ENCODE measurements at regions of chr12 and their contacts with region 1.

Region 1: DNA sequence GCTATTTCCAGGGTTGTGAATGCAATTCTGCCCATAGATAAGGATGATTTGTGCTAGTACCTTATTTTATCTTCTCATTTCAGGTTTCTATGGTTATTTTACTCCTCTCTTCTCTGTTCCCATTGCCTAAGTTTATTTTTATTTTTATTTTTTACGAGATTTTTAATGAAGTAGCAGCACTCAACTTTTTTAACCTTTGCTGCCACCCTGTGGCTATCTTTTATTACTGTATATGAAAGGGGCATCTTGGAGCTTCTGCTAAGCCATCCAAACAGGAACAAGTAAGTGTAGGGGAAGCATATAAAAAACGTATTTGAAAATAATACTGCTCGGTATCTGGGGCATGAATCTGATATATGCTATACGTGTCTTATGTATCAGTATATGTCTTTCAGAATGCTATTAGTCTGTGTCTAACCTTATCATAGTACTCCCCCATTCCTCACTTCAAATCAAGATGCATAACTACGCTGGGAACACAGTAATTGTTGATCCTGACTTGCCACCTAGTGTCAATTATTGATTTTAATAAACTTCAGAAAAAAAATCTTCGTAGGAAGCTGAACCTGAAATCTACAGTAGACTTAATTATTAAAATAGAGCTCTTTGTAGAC is 60.3 kb downstream of the KLRG1 start:
- DNase-seq: peak; percentile 34 to 57
- ATAC-seq: peak; percentile 70 to 91; a peak in 3 of 6 replicates
- H3K4me3 ChIP-seq: no peak overlapping the region
- H3K27ac ChIP-seq: no peak overlapping the region
- H3K4me1 ChIP-seq: no peaks in the 10 kb centered on the region
- CTCF ChIP-seq: peak; percentile 79
- EP300 ChIP-seq: no peak
- POLR2A ChIP-seq: no peak
- RAD21 ChIP-seq: peak; percentile 68 to 71

Region 2: DNA sequence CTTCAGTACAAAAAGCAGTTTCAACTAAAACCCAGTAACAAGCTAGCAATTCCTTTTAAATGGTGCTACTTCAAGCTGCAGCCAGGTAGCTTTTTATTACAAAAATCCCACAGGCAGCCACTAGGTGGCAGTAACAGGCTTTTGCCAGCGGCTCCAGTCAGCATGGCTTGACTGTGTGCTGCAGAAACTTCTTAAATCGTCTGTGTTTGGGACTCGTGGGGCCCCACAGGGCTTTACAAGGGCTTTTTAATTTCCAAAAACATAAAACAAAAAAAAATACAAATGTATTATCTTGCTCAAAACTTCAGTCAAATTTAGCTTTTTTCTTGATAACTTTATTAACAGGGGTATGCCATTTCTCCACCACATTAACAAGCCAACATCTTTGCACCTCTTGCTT is 505.3 kb before region 1 on chr12:
- CTCF ChIA-PET with region 1: interaction called, 20 read pairs
- POLR2A ChIA-PET with region 1: no interaction called
- DNase-seq: peak; percentile 44 to 66
- ATAC-seq: peak; percentile 84 to 95
- H3K4me3 ChIP-seq: no peak overlapping the region
- H3K27ac ChIP-seq: no peak overlapping the region
- H3K4me1 ChIP-seq: no peaks in the 10 kb centered on the region
- CTCF ChIP-seq: peak; percentile 82
- EP300 ChIP-seq: no peak
- POLR2A ChIP-seq: no peak
- RAD21 ChIP-seq: peak; percentile 72 to 76

Region 3: GRCh38 chr12:8949342-8950220 is 100.0 kb before region 1 on chr12 and contains the start of gene M6PR:
- CTCF ChIA-PET with region 1: interaction called, 19 read pairs
- POLR2A ChIA-PET with region 1: interaction called, 4 read pairs
- DNase-seq: peak; percentile 96 to 98
- ATAC-seq: peak; percentile 95 to 96
- H3K4me3 ChIP-seq: peak within 1 kb of the TSS; percentile 100
- H3K27ac ChIP-seq: peak within 1 kb of the TSS; percentile 90 to 93
- H3K4me1 ChIP-seq: peaks cover 19% of the 10 kb centered on the region
- CTCF ChIP-seq: peak; percentile 44
- EP300 ChIP-seq: no peak
- POLR2A ChIP-seq: peak; percentile 92
- RAD21 ChIP-seq: peak; percentile 52 to 60; a peak in 4 of 5 replicates
- polyA plus RNA-seq, gene M6PR: 162 and 227 TPM in 2 replicates

Region 4: DNA sequence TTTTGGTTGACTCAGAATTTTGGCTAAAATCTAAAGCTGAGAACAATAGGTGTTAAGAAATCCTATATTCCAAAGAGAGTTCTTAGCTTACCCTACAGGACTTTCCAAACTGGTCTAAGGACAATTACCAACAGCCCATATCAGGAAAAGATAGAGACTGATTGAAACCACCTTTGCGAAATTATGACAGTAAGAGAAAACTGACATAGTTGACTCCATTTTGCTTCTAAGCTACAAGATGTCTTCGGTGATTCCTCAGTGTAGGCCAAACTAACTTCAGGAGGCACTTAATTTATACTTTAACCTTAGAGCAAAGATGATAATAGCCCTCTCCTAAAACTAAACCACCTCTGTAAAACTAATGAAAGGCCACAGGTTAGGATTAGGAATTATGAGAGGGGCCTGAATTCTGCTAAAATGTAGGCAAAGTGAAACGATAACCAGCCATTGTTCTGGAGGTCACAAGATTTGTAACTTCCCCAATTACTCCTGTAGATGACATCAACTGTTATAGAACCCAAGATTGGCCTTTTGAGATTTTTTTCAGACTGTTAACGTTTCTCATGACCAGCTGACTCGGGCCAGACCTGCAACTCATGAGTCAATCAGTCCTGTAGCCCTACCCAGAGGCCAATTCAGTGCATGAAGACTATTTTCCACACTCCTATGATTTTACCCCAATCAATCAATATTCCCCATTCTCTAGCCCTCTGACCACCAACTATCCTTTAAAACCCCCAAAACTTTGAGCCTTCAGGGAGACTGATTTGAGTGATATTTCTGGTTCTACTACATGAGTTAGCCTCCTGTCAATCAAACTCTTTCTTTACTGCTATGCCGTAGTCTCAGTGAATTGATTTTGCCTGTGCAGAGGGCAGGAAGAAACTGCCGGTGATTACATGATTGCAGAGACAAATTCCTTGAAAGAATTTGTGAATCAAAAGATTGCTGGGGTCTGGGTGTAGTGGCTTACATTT is 17.1 kb before region 1 on chr12:
- CTCF ChIA-PET with region 1: interaction called, 17 read pairs
- POLR2A ChIA-PET with region 1: interaction called, 3 read pairs
- DNase-seq: no peak
- ATAC-seq: no peak
- H3K4me3 ChIP-seq: no peak overlapping the region
- H3K27ac ChIP-seq: no peak overlapping the region
- H3K4me1 ChIP-seq: no peaks in the 10 kb centered on the region
- CTCF ChIP-seq: no peak
- EP300 ChIP-seq: no peak
- POLR2A ChIP-seq: no peak
- RAD21 ChIP-seq: no peak

Region 5: DNA sequence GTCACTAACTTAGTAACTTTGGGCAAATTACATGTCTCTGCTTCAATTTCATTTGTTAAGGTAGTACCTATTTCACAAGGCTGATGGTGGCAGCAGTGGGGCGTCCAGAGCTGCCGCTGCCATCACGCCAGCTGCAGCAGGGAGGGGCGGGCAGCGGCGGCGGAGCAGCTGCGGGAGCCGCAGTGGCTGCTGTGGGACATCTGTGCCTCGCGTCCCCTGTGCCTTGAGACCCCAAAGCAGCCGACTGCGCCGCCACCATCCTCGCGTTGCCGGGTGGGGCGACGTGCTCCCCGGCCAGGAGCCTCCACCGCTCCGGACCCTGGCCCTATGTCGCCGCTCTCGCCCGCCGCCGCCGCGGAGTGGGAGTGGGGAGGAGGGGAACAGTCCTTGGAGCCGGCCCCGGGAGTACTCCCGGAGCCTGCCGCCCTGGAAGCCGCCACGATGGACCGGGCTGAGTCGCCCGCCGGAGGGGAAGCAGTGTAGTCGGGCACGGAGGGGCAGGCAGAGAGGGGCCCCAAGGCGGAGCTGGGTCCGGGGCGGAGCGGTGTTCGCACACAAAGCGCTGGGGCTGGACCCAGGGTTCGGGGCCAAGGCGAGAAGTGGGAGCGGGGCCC is 14.7 kb after region 1 on chr12:
- CTCF ChIA-PET with region 1: interaction called, 26 read pairs
- POLR2A ChIA-PET with region 1: no interaction called
- DNase-seq: peak; percentile 57 to 75
- ATAC-seq: peak; percentile 86 to 88
- H3K4me3 ChIP-seq: peak overlapping the region; percentile 56
- H3K27ac ChIP-seq: peak overlapping the region; percentile 76 to 90
- H3K4me1 ChIP-seq: peaks cover 9% of the 10 kb centered on the region; the same call in 2 of the 3 replicates
- CTCF ChIP-seq: peak; percentile 53
- EP300 ChIP-seq: no peak
- POLR2A ChIP-seq: peak; percentile 79
- RAD21 ChIP-seq: peak; percentile 57 to 62

Region 6: GRCh38 chr12:9214536-9214935 is 164.9 kb after region 1 on chr12:
- CTCF ChIA-PET with region 1: no interaction called
- POLR2A ChIA-PET with region 1: no interaction called
- DNase-seq: no peak
- ATAC-seq: no peak
- H3K4me3 ChIP-seq: no peak overlapping the region
- H3K27ac ChIP-seq: no peak overlapping the region
- H3K4me1 ChIP-seq: no peaks in the 10 kb centered on the region
- CTCF ChIP-seq: no peak
- EP300 ChIP-seq: no peak
- POLR2A ChIP-seq: no peak
- RAD21 ChIP-seq: no peak